Activated naive CD4-positive, alpha-beta T cell treated with anti-CD3 and anti-CD28 coated beads, Interleukin-2, amount 10 ng/mL, durations not matched to agents 7 days and 5 days (primary cell): ENCODE measurements at regions of chr14 and their contacts with region 1.

Region 1: GRCh38 chr14:65847075-65847847 is 434.7 kb downstream of the FUT8 start:
- DNase-seq: peak; percentile 89
- H3K4me3 Mint-ChIP-seq: peak overlapping the region; percentile 41
- H3K27ac Mint-ChIP-seq: peak overlapping the region; percentile 95
- H3K4me1 Mint-ChIP-seq: peaks cover 84% of the 10 kb centered on the region
- H3K27me3 Mint-ChIP-seq: no peaks in the 10 kb centered on the region

Region 2: DNA sequence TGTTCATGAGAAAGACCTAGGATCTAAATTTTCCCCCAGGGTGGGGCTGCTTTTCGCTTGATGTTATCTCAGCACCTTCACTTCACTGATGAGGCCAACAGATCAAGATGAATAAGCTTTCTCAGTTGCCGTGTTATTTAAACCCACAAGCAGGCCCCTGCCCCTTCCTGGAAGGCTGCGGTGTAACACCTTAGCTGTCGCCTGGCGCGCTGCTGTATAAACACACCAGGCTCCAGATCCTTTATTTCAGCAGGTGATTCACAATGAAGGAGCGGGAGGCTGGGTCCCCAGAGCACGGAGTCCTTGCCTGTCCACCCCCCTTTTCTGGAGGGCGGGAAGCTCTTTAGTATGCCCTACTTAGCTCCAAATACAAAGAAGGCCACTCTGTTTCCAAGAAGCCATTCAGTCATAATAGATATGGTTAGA is 80.7 kb after region 1 on chr14:
- CTCF ChIA-PET with region 1: interaction called, 11 read pairs
- DNase-seq: peak; percentile 90
- H3K4me3 Mint-ChIP-seq: peak overlapping the region; percentile 42
- H3K27ac Mint-ChIP-seq: peak overlapping the region; percentile 99
- H3K4me1 Mint-ChIP-seq: peaks cover 79% of the 10 kb centered on the region
- H3K27me3 Mint-ChIP-seq: no peaks in the 10 kb centered on the region